Endothelial cell of umbilical vein (primary cell): ENCODE measurements at regions of chr4 and their contacts with region 1.

Region 1: GRCh38 chr4:69689599-69689998 is 36.6 kb upstream of the UGT2A1 start:
- DNase-seq: peak; percentile 72
- H3K4me3 ChIP-seq: no peak overlapping the region
- H3K27ac ChIP-seq: peak overlapping the region; percentile 48
- H3K4me1 ChIP-seq: peaks cover 9% of the 10 kb centered on the region
- H3K27me3 ChIP-seq: no peaks in the 10 kb centered on the region
- CTCF ChIP-seq: peak in 1 of 2 donors; percentile 31
- POLR2A ChIP-seq: no peak

Region 2: GRCh38 chr4:69727926-69728325 is 38.3 kb after region 1 on chr4:
- CTCF ChIA-PET with region 1: interaction called, 9 read pairs
- POLR2A ChIA-PET with region 1: no interaction called
- dilution Hi-C with region 1: no loop called
- intact Hi-C with region 1: loop called (anchors 1 kb)
- DNase-seq: no peak
- H3K4me3 ChIP-seq: no peak overlapping the region
- H3K27ac ChIP-seq: peak overlapping the region; percentile 94
- H3K4me1 ChIP-seq: peaks cover 60% of the 10 kb centered on the region
- H3K27me3 ChIP-seq: no peaks in the 10 kb centered on the region
- CTCF ChIP-seq: no peak
- POLR2A ChIP-seq: no peak

Region 3: GRCh38 chr4:69773484-69773883 is 83.9 kb after region 1 on chr4:
- CTCF ChIA-PET with region 1: interaction called, 3 read pairs
- POLR2A ChIA-PET with region 1: no interaction called
- dilution Hi-C with region 1: no loop called
- intact Hi-C with region 1: loop called (anchors 1 kb)
- DNase-seq: peak; percentile 97
- H3K4me3 ChIP-seq: no peak overlapping the region
- H3K27ac ChIP-seq: peak overlapping the region; percentile 95
- H3K4me1 ChIP-seq: peaks cover 22% of the 10 kb centered on the region
- H3K27me3 ChIP-seq: no peaks in the 10 kb centered on the region
- CTCF ChIP-seq: no peak
- POLR2A ChIP-seq: no peak

Region 4: GRCh38 chr4:69874516-69874915 is 184.9 kb after region 1 on chr4:
- CTCF ChIA-PET with region 1: interaction called, 105 read pairs
- POLR2A ChIA-PET with region 1: no interaction called
- dilution Hi-C with region 1: no loop called
- intact Hi-C with region 1: no loop called
- DNase-seq: no peak
- H3K4me3 ChIP-seq: no peak overlapping the region
- H3K27ac ChIP-seq: no peak overlapping the region
- H3K4me1 ChIP-seq: no peaks in the 10 kb centered on the region
- H3K27me3 ChIP-seq: no peaks in the 10 kb centered on the region
- CTCF ChIP-seq: no peak
- POLR2A ChIP-seq: no peak

Region 5: DNA sequence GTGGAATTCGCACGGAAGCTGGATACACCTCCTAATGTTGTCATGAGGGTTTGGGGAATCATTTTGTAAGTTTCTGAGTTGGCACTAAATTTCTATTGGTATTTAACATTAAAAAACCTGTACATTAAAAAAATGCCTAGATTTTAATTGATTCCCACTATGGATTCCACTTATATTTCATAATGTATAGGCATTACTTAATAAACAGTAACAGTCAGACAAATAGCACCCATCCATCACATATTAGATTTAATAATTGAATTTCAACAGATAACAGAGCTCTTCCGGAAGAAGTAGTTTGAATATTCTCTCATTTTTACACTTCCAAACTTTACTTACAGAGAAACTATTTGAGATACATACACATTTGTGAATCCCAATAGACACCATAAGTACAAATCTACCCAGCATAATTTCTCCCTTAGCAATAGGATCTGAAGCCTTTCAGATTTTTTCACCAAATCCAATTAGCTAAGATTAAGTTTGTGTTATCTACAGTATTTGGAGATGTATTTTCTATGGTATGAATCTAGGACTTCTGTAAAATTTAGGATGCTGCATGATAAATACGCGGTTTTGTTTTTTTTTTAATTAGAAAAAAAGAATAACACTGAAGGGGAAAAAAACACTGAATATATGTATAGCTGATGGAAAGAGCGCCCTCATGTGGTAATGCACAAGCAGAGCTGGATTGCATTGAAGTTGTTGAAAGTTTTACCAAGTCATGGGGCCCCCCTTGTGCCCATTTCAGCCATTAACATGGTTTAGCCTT is 493.8 kb after region 1 on chr4:
- CTCF ChIA-PET with region 1: interaction called, 62 read pairs
- POLR2A ChIA-PET with region 1: no interaction called
- dilution Hi-C with region 1: no loop called
- intact Hi-C with region 1: loop called (anchors 1 kb)
- DNase-seq: peak; percentile 53
- H3K4me3 ChIP-seq: no peak overlapping the region
- H3K27ac ChIP-seq: no peak overlapping the region
- H3K4me1 ChIP-seq: no peaks in the 10 kb centered on the region
- H3K27me3 ChIP-seq: no peaks in the 10 kb centered on the region
- CTCF ChIP-seq: peak; percentile 72 to 80
- POLR2A ChIP-seq: no peak

Region 6: DNA sequence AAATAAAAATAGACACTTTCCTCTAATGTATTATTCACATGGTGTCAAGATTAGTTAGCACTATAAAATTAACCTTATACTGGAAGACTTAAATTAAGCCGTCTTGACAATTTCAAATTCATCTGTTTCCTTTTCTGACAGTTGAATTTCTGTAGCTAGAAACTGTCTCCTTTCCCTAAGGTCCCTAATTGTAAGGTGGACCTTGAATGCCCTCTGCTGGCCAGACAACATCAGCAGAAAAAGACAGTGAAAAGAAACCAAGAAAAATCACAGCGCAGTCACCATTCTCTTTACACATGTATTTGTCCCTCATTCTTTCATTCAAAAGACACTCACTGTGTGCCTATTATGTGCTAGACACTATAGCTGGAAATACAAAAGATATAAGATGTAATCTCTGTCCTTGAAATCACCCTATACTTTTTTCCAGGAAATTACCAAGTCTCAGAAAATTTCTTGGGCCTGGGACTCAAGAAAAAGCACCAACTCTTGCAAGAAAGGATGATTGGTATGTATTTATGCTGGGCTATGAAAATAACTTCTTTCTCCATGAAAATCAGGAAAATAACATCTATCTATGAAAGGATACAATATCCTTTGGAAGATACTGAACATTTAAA is 869.7 kb after region 1 on chr4:
- CTCF ChIA-PET with region 1: interaction called, 10 read pairs
- POLR2A ChIA-PET with region 1: no interaction called
- dilution Hi-C with region 1: no loop called
- intact Hi-C with region 1: no loop called
- DNase-seq: peak; percentile 47
- H3K4me3 ChIP-seq: no peak overlapping the region
- H3K27ac ChIP-seq: no peak overlapping the region
- H3K4me1 ChIP-seq: no peaks in the 10 kb centered on the region
- H3K27me3 ChIP-seq: no peaks in the 10 kb centered on the region
- CTCF ChIP-seq: peak; percentile 53 to 61
- POLR2A ChIP-seq: no peak